ENCODE measurements at regions of chr6 and their contacts with region 1.

Region 1: GRCh38 chr6:28335564-28336283 is at the start of gene ZSCAN31:
- DNase-seq: peak; percentile 59 to 96 (median 72)
- ATAC-seq: peak; percentile 91
- H3K4me3 ChIP-seq: peak within 1 kb of the TSS; percentile 65
- H3K4me3 Mint-ChIP-seq: no peak within 1 kb of the TSS
- H3K27ac ChIP-seq: peak within 1 kb of the TSS; percentile 81 to 85
- H3K27ac Mint-ChIP-seq: no peak within 1 kb of the TSS
- H3K4me1 ChIP-seq: peaks cover 23% of the 10 kb centered on the region
- H3K4me1 Mint-ChIP-seq: peaks cover 5% of the 10 kb centered on the region
- H3K27me3 ChIP-seq: no peaks in the 10 kb centered on the region
- H3K27me3 Mint-ChIP-seq: no peaks in the 10 kb centered on the region
- CTCF ChIP-seq: no peak
- total RNA-seq, gene ZSCAN31: 0.88 to 1.1 TPM

Region 2: DNA sequence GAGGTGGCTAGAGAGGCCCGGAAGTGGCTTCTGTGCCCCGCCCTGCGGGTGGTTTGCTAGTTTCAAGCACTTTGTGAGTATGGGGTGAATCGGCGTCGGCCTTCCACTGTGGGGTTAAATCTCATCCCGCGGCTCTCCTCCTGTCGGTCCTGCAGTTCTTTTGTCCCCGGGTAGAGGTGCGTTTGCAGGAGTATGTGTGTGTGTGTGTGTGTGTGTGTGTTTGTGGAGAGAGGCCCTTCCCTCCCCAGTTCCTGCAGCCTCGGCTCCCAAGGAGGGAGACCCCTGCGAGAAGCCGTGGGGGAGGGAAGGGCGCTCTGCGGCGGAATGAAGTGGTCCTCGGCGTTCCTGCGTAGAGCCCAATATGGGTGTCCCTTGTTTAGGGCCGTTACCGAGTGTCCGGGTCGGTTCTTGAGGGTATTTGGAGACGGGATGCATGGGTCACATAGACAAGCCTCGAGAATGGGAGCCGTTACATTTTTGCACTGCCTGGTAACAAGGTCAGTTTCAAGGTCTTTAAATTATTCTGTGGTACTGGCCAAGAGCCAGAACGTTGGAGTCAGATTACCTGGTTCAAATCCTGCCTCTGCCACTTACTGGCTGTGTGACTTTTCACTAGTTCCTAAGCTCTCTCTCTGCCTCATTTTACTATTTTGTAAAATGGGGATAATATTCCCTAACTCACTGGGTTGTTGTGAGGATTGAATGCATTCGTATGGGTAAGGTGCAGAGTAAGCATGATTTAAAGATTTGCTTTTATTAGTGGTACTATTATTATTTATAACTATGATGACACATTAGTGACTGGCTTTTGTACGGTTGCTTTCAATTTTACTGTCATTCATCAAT is 14.4 kb after region 1 on chr6 and contains the start of gene ZKSCAN3:
- CTCF ChIA-PET with region 1: interaction called, 17 read pairs
- POLR2A ChIA-PET with region 1: interaction called, 13 read pairs
- intact Hi-C with region 1: no loop called
- DNase-seq: peak; percentile 65 to 89 (median 80)
- ATAC-seq: peak; percentile 100
- H3K4me3 ChIP-seq: peak within 1 kb of the TSS; percentile 73
- H3K4me3 Mint-ChIP-seq: peak within 1 kb of the TSS; percentile 99
- H3K27ac ChIP-seq: peak within 1 kb of the TSS in 1 of 2 donors; percentile 46
- H3K27ac Mint-ChIP-seq: peak within 1 kb of the TSS; percentile 85
- H3K4me1 ChIP-seq: peaks cover 13% of the 10 kb centered on the region
- H3K4me1 Mint-ChIP-seq: peaks cover 43% of the 10 kb centered on the region
- H3K27me3 ChIP-seq: peaks cover 0 to 11% of the 10 kb centered on the region in 2 experiments
- H3K27me3 Mint-ChIP-seq: peaks cover 27% of the 10 kb centered on the region
- CTCF ChIP-seq: no peak
- total RNA-seq, gene ZKSCAN3: 0.88 to 0.89 TPM

Region 3: DNA sequence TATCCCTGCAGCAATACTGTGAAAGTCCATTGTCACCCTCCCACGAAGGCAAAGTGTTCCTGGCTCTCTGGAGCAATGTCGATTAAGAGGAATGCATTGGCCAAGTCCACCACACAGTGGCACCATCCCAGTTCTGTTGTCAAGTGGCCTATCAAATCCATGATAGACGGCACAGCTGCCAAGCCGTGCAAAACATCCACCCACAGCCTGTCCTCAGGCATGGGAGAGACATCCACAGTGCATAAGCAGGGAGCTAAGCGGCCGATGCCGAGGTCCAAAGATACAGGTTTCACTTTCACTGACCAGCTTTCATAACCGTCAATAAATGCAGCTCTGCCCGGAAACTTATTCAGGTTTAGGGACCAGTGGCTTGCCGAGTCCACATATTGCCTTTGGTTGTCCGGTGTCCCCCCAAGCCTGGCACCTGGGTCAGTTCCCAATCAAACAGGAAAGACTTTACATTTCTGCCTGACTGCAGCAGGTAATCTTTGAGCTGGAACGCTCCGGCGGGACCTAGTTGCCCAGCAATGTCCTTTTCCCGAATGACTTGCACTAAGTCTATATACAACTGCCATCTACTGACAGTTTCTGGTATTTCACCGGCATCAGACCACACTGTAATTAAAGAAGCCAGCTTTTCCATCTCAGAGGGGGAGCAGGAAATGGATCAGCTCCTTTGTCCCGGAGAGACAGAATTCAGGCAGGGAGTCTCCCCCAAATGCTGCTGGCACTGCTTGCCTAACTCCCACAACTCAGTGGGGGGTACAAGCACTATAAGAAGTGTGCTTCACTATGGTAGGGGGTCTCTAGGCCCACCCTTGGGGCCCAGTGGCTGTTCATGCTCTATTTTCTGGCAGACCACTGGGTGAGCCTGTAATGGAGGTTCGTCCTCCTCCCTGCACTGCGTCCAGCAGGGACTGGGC is 20.3 kb after region 1 on chr6:
- CTCF ChIA-PET with region 1: interaction called, 17 read pairs
- POLR2A ChIA-PET with region 1: interaction called, 13 read pairs
- intact Hi-C with region 1: no loop called
- DNase-seq: peak; percentile 26 to 84 (median 42)
- ATAC-seq: peak; percentile 93
- H3K4me3 ChIP-seq: peak overlapping the region; percentile 64
- H3K4me3 Mint-ChIP-seq: peak overlapping the region; percentile 90
- H3K27ac ChIP-seq: no peak overlapping the region
- H3K27ac Mint-ChIP-seq: peak overlapping the region; percentile 22
- H3K4me1 ChIP-seq: peaks cover 21% of the 10 kb centered on the region
- H3K4me1 Mint-ChIP-seq: peaks cover 42% of the 10 kb centered on the region
- H3K27me3 ChIP-seq: no peaks in the 10 kb centered on the region
- H3K27me3 Mint-ChIP-seq: no peaks in the 10 kb centered on the region
- CTCF ChIP-seq: peak; percentile 77

Measured in CD4-positive, alpha-beta T cell (primary cell).